A673 (cell line): ENCODE measurements at regions of chr13 and their contacts with region 1.

Region 1: GRCh38 chr13:98142380-98143156 is at the start of gene FARP1:
- DNase-seq: peak; percentile 84
- H3K4me3 ChIP-seq: peak within 1 kb of the TSS; percentile 85
- H3K27ac ChIP-seq: peak within 1 kb of the TSS; percentile 82
- H3K4me1 ChIP-seq: peaks cover 33% of the 10 kb centered on the region
- H3K27me3 ChIP-seq: no peaks in the 10 kb centered on the region
- CTCF ChIP-seq: no peak
- total RNA-seq, gene FARP1: 177 and 181 TPM in 2 replicates

Region 2: DNA sequence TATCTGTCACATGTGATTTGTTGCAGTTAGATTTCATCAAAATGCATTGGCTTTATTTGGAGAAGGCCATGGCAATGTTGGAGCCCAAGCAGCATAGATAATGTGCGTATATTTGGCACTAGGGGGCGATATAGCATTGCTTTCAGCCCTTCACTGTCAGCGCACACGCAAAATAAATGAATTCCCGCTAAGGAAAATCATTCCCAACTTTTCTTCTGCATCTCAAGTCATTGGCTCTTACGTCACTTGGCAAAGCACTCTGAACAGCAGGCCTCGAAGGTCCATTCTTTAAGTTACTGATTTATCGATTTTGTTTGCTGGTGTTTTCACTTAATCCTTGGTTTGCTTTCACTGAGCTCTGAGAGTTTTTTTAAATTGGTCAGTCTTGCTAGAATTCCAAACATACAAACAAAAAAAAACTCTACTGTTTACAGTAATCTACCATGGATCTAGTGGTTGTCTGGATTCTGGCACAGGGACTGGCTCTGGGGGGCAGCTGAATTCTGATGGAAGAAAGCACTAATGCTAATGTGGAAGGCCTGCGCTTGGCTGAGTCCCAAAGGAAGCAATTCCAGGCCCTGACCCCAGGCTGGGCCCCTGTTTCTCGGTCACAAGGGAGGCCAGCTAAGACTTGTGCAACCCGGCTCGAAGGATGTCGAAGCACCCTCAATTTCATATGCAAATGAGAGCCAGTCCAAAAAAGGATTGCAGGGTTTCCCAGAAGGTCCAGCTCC is 286.8 kb before region 1 on chr13:
- CTCF ChIA-PET with region 1: no interaction called
- POLR2A ChIA-PET with region 1: no interaction called
- intact Hi-C with region 1: loop called (anchors 10 kb)
- DNase-seq: peak; percentile 94
- H3K4me3 ChIP-seq: no peak overlapping the region
- H3K27ac ChIP-seq: peak overlapping the region; percentile 88
- H3K4me1 ChIP-seq: peaks cover 34% of the 10 kb centered on the region
- H3K27me3 ChIP-seq: no peaks in the 10 kb centered on the region
- CTCF ChIP-seq: peak; percentile 88

Region 3: DNA sequence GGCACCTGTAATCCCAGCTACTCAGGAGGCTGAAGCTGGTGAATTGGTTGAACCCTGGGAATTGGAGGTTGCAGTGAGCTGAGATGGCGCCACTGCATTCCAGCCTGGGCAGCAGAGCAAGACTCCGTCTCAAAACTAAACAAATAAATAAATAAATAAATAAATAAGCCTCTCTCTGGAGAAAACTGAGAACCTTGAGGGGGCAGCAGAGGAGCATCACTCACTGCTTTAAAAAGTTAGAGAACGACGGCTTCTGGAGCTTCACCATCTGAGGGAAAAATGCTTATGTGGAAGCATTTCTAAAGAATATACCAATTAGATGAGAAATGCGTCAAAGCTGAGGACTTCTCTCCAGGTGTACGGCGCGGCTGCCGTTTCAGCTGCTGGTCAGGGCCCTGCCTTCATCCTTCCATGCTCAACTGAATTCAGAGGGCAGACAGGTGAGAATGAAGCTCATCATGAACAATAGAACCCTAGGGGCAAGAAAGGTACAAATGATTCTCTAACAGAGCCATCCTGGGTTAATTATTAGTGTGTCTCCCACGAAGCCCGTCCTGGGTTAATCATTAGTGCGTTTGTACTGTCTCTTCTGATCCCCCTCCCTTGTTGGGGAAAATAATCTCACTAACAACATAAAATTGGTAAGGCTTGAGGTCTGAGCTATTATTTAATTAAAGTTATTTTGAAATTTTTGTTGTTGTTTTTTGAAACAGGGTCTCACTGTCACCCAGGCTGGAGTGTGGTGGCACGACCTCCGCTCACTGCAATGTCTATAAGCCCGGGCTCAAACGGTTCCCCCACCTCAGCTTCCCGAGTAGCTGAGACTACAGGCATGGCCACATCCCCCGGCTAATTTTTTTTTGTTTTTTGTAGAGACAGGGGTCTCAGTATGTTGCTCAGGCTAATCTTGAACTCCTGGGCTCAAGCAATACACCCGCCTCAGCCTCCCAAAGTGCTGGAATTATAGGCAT is 109.0 kb before region 1 on chr13:
- CTCF ChIA-PET with region 1: interaction called, 4 read pairs
- POLR2A ChIA-PET with region 1: no interaction called
- intact Hi-C with region 1: loop called (anchors 5 kb)
- DNase-seq: peak; percentile 87
- H3K4me3 ChIP-seq: no peak overlapping the region
- H3K27ac ChIP-seq: no peak overlapping the region
- H3K4me1 ChIP-seq: peaks cover 22% of the 10 kb centered on the region
- H3K27me3 ChIP-seq: no peaks in the 10 kb centered on the region
- CTCF ChIP-seq: peak; percentile 60

Region 4: GRCh38 chr13:98216135-98216565 is 73.6 kb after region 1 on chr13:
- CTCF ChIA-PET with region 1: no interaction called
- POLR2A ChIA-PET with region 1: no interaction called
- intact Hi-C with region 1: loop called (anchors 5 kb)
- DNase-seq: peak; percentile 93
- H3K4me3 ChIP-seq: no peak overlapping the region
- H3K27ac ChIP-seq: peak overlapping the region; percentile 84
- H3K4me1 ChIP-seq: peaks cover 82% of the 10 kb centered on the region
- H3K27me3 ChIP-seq: no peaks in the 10 kb centered on the region
- CTCF ChIP-seq: no peak

Region 5: DNA sequence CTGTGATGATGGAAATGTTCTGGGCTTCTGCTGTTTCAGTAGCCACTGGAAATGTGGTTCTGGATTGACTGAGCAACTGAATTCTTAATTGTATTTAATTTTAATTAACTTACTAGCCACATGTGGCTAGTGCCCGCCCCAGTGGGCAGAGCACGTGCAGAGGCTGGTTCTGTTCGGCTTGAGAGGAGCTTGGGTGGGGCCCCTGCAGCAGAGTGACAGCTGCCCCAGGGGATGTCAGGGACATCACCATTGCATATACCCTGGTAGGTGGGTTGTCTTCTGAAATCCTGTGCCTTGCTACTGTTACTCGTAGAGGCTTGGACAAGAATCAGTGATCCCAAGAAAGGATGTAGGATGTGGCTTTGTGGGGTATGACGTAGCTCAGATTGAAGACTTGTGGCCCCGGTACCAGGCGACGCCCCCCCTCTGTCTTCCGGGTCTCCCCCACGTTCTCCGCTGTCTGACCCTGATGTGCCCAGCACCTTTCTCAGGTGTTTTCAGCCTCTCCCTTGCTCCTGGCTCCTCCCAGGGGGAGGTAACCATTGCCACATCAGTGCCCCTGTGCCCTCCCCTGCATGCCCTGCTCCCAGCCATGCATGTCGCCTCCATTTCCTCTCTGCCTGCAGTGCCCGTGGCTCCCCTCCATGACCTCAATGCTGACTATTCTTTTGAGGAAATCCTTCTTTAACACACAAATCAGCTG is 137.1 kb after region 1 on chr13:
- CTCF ChIA-PET with region 1: no interaction called
- POLR2A ChIA-PET with region 1: no interaction called
- intact Hi-C with region 1: loop called (anchors 10 kb)
- DNase-seq: no peak
- H3K4me3 ChIP-seq: no peak overlapping the region
- H3K27ac ChIP-seq: peak overlapping the region; percentile 72
- H3K4me1 ChIP-seq: peaks cover 50% of the 10 kb centered on the region
- H3K27me3 ChIP-seq: no peaks in the 10 kb centered on the region
- CTCF ChIP-seq: no peak

Region 6: DNA sequence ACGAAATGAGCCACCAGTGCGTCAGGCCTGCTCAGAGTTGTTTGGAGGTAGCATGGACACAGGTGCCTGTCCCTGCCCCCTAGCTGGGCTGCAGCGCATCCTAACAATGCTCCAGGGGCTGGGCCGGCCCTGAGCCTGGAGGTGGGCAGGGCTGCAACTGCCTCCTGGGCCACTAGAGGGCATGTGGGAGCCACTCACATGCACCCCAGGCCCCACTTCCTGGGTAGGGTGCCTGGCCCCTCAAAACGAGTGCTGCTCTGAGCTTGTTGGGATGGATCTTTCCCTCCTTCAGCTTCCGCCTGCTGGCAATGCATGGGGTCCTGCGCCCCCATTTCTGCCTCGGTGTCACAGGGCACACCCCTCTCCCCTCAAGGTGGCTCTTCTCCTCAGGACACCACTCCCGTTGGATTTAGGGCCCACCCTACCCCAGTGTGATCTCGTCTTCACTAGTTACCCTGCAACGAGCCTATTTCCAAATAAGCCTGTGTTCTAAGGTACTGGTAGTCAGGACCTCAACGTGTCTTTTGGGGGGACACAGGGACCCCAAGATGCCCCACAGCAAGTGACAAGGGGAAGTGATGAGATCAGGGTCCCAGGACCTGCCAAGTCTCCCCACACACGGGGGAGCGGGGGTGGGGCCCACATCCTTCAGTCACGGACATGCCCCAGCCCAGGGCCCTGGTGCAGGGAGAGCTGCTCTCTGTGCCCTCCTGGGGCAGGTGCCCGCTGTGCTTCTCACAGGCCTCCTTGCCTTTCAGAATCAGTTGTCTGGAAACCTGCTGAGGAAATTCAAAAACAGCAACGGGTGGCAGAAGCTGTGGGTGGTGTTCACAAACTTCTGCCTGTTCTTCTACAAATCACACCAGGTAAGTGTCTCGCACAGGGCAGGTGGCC is 303.0 kb after region 1 on chr13:
- CTCF ChIA-PET with region 1: interaction called, 4 read pairs
- POLR2A ChIA-PET with region 1: no interaction called
- intact Hi-C with region 1: loop called (anchors 5 kb)
- DNase-seq: peak; percentile 74
- H3K4me3 ChIP-seq: no peak overlapping the region
- H3K27ac ChIP-seq: peak overlapping the region; percentile 23
- H3K4me1 ChIP-seq: peaks cover 6% of the 10 kb centered on the region
- H3K27me3 ChIP-seq: no peaks in the 10 kb centered on the region
- CTCF ChIP-seq: peak; percentile 94

Region 7: DNA sequence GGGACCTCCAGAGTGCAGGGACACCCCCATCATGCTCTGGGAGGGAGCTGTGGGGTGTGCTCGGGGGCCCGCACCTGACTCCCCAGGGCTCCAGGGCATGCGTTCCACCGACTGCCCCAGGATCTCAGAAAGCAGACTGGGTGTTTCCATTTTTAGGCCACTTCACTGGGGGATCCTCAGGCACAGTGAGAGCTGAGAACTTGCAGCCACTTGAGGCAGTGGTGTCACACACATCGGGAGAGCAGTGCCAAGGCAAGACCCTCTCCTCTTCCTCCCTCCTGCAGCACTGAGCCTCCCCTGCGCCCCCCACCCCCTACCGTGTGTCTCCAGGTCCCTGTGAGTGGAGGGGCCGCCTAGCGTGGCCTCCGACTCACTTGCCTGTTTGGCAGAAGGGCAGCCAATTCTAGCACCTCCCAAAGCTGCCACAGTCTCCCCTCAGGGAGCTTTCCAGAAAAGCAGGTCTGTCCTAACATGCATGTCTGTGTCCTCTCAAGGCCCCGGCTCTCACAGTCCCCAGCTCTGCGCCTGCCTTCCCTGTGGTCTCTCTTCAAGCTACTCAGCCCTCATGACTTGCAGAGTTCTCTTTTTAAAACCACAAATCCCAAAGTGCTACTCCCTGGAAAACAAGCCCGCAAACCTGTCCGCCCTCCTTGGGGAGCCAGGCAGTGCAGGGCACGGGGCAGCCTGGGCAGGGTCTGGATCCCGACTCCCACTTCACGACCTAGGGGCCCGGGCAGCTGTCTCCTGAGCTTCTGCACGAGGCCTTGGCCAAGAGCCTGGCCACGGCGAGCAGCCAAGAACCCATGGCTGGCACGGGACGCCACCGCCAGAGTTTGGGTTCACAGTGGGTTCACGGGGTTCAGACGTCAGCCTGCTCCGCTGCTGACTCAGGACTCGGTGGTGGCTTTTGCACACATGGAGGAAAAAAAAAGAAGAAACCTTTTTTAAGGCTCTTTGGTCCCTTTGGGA is 340.2 kb after region 1 on chr13:
- CTCF ChIA-PET with region 1: no interaction called
- POLR2A ChIA-PET with region 1: interaction called, 15 read pairs
- intact Hi-C with region 1: no loop called
- DNase-seq: no peak
- H3K4me3 ChIP-seq: no peak overlapping the region
- H3K27ac ChIP-seq: peak overlapping the region; percentile 82
- H3K4me1 ChIP-seq: peaks cover 32% of the 10 kb centered on the region
- H3K27me3 ChIP-seq: no peaks in the 10 kb centered on the region
- CTCF ChIP-seq: peak; percentile 43